ENCODE measurements at regions of chr17 and their contacts with region 1.

Region 1: DNA sequence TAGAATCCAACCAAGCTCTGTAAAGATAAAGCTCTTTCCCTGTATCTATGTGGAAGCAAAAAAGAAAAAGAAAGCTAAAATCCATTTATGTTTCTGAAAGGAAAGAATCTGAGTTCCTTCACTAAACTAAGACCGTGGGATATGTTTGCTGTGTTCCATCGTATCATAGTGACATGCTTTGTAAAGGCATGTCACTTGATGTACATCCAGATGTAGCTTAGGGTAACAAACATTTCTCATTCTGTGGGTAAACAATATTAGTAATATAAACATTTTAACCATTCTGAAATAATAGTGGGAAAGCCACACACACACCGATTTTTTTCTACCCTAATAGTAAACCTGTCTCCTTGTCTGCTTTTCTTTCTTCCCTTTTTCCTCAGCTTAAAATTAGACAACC is 78.1 kb downstream of the TUBD1 start:
- DNase-seq: no peak
- ATAC-seq: 0 out of 2 replicates have a peak, but pooled peaks have one; percentile 16
- H3K4me3 ChIP-seq: no peak overlapping the region
- H3K27ac ChIP-seq: peak overlapping the region; percentile 92
- H3K4me1 ChIP-seq: peaks cover 14% of the 10 kb centered on the region
- H3K27me3 ChIP-seq: no peaks in the 10 kb centered on the region
- CTCF ChIP-seq: no peak

Region 2: GRCh38 chr17:59870482-59870881 is 55.8 kb after region 1 on chr17:
- CTCF ChIA-PET with region 1: no interaction called
- POLR2A ChIA-PET with region 1: no interaction called
- in situ Hi-C with region 1: no loop called
- intact Hi-C with region 1: loop called (anchors 1 kb)
- DNase-seq: no peak
- ATAC-seq: peak; percentile 58
- H3K4me3 ChIP-seq: no peak overlapping the region; a peak in 1 of 4 replicates
- H3K27ac ChIP-seq: peak overlapping the region; percentile 69
- H3K4me1 ChIP-seq: 0 out of 2 replicates have a peak, but pooled peaks cover 5% of the 10 kb centered on the region
- H3K27me3 ChIP-seq: no peaks in the 10 kb centered on the region
- CTCF ChIP-seq: no peak

Region 3: GRCh38 chr17:60065136-60065535 is 250.5 kb after region 1 on chr17:
- CTCF ChIA-PET with region 1: no interaction called
- POLR2A ChIA-PET with region 1: no interaction called
- in situ Hi-C with region 1: no loop called
- intact Hi-C with region 1: no loop called
- DNase-seq: no peak
- ATAC-seq: no peak
- H3K4me3 ChIP-seq: no peak overlapping the region
- H3K27ac ChIP-seq: no peak overlapping the region
- H3K4me1 ChIP-seq: no peaks in the 10 kb centered on the region
- H3K27me3 ChIP-seq: no peaks in the 10 kb centered on the region
- CTCF ChIP-seq: no peak